ENCODE measurements at regions of chr2 and their contacts with region 1.

Region 1: GRCh38 chr2:15122915-15123314 is 438.2 kb downstream of the NBAS start:
- DNase-seq: no peak
- H3K4me3 ChIP-seq: no peak overlapping the region
- H3K27ac ChIP-seq: no peak overlapping the region
- H3K4me1 ChIP-seq: no peaks in the 10 kb centered on the region
- H3K27me3 ChIP-seq: no peaks in the 10 kb centered on the region
- CTCF ChIP-seq: no peak

Region 2: GRCh38 chr2:15154297-15154696 is 31.4 kb after region 1 on chr2:
- intact Hi-C with region 1: loop called (anchors 1 kb)
- DNase-seq: no peak
- H3K4me3 ChIP-seq: no peak overlapping the region
- H3K27ac ChIP-seq: no peak overlapping the region
- H3K4me1 ChIP-seq: no peaks in the 10 kb centered on the region
- H3K27me3 ChIP-seq: no peaks in the 10 kb centered on the region
- CTCF ChIP-seq: no peak